Activated naive CD4-positive, alpha-beta T cell treated with anti-CD3 and anti-CD28 coated beads, Interleukin-2, amount 10 ng/mL, durations not matched to agents 7 days and 5 days (primary cell): ENCODE measurements at regions of chr5 and their contacts with region 1.

Region 1: DNA sequence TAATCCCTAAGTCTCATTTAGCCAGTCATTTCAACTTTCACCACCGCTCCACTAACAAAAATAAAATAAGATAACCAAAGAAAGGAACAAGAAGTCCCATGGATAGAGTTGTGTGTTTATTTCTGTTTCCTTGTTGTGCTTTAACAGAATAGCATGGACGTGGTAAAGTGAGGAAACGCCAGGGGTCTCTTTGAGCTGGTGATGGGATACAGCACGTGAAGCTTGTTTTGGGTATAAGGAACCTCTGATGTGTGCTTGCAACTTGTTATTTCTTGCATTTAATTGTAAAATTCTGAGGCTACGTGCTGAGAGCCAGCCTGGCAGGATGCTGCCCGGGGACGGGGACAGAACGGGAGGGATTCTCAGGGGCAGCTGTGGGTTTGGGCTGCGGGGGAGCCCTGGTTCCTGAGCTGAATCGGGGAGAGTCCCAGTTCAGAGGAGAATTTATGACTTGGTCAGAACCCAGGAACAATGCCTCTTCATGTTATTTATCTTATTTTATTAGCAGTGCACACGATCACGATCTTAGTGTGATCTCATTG is 63.4 kb downstream of the ANKRD33B start:
- DNase-seq: no peak
- H3K4me3 Mint-ChIP-seq: peak overlapping the region; percentile 72
- H3K27ac Mint-ChIP-seq: peak overlapping the region; percentile 13
- H3K4me1 Mint-ChIP-seq: peaks cover 25% of the 10 kb centered on the region
- H3K27me3 Mint-ChIP-seq: peaks cover 8% of the 10 kb centered on the region

Region 2: DNA sequence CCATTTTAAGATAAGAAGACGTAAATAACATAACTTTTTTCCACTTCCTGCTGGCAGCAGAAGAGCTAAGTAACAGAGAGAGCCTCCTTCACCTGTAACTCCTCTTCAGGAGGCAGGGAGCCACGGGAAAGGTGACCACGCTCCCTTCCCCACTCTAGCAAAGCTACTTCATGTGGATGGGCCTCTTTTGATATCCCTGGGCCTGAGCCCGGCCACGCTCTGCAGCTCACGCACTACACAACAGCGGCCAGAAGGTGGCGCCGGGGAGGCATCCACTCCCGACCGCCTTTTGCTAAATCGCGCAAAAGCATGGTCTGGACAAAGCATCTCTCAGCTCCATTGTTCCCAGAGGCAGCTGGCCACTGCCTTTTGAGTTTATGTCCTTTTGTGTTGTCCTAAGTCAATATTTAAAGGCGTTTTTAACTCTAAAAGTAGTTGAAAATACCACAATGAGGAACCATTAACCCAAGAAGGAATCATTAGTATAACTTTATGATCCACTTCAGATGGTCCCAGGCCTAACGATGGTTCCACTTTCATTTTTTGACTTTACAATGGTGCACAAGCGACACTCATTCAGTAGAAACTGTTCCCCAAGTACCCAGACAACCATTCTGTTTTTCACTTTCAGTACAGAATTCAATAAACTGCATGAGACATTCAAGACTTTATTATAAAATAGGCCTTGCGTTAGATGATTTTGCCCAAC is 343.1 kb before region 1 on chr5:
- CTCF ChIA-PET with region 1: interaction called, 12 read pairs
- DNase-seq: peak; percentile 81
- H3K4me3 Mint-ChIP-seq: no peak overlapping the region
- H3K27ac Mint-ChIP-seq: no peak overlapping the region
- H3K4me1 Mint-ChIP-seq: peaks cover 14% of the 10 kb centered on the region
- H3K27me3 Mint-ChIP-seq: peaks cover 10% of the 10 kb centered on the region

Region 3: GRCh38 chr5:10445352-10445751 is 181.9 kb before region 1 on chr5:
- CTCF ChIA-PET with region 1: interaction called, 84 read pairs
- DNase-seq: peak; percentile 43
- H3K4me3 Mint-ChIP-seq: peak overlapping the region; percentile 16
- H3K27ac Mint-ChIP-seq: peak overlapping the region; percentile 58
- H3K4me1 Mint-ChIP-seq: peaks cover 63% of the 10 kb centered on the region
- H3K27me3 Mint-ChIP-seq: peaks cover 13% of the 10 kb centered on the region

Region 4: GRCh38 chr5:10452768-10453331 is 174.4 kb before region 1 on chr5:
- CTCF ChIA-PET with region 1: interaction called, 84 read pairs
- DNase-seq: peak; percentile 32
- H3K4me3 Mint-ChIP-seq: no peak overlapping the region
- H3K27ac Mint-ChIP-seq: no peak overlapping the region
- H3K4me1 Mint-ChIP-seq: peaks cover 24% of the 10 kb centered on the region
- H3K27me3 Mint-ChIP-seq: peaks cover 12% of the 10 kb centered on the region

Region 5: DNA sequence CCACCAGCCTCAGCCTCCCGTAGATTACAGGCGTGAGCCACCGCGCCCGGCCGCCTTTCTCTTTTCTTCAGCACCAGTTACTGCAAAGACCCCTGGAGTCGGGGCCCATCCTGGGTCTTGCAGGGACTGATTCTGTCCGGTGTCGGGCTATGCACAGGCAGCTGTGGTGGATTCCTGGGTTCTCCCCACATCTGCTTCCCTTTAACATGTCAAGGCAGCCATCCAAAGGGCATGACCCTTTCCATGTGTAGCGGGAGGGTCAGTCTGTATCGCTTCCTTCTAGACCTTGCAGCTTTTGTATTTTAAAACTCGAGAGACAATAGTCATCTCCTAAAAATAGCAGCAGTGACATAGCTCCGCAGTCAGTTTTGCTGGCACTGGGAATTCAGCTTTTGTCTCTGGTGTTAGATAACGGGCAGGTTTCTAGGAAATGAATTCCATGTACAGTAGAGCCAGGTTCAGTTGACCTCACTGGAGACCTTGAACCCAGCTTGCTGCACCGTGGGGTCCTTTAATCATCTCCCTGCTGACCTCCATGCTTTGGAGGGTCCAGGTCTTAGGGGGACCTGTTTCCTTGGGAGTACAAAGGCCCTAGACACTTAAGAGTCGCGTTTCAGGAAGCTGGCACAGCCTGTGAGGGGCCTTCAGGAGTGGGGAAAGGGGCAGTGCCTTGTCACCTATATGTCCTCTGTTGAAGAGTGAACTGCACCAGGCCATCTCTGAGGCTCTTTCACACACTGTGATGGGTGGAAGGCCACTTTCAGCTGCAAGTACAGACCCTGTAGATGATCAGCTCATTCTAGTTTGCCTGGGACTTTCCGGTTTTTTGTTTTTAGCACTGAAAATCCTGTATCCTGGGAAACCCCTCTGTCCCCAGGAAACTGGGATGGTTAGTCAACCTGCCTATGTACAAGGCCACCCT is 49.6 kb before region 1 on chr5:
- CTCF ChIA-PET with region 1: interaction called, 14 read pairs
- DNase-seq: no peak
- H3K4me3 Mint-ChIP-seq: no peak overlapping the region
- H3K27ac Mint-ChIP-seq: no peak overlapping the region
- H3K4me1 Mint-ChIP-seq: peaks cover 26% of the 10 kb centered on the region
- H3K27me3 Mint-ChIP-seq: peaks cover 6% of the 10 kb centered on the region

Region 6: DNA sequence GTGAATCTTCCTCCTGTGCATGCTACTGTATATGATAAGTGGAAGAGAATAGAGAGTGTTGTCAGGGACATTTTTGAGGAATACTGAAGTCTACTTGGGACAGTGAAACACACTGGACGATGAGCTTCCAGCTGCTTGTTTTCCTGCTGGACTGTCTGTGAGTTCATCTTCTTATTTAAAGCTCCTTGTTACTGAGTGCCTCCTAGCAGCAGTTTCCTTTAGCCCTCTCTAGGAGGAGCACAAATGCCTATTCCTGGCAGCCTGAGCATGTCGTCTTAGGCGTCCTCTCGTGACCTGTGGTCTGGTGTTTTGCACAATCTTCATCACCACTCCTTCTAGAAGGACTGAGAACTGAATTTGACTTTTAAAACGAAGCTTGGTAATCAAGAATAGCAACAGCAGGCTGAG is 19.6 kb before region 1 on chr5:
- CTCF ChIA-PET with region 1: interaction called, 14 read pairs
- DNase-seq: no peak
- H3K4me3 Mint-ChIP-seq: no peak overlapping the region
- H3K27ac Mint-ChIP-seq: no peak overlapping the region
- H3K4me1 Mint-ChIP-seq: peaks cover 16% of the 10 kb centered on the region
- H3K27me3 Mint-ChIP-seq: no peaks in the 10 kb centered on the region

Region 7: GRCh38 chr5:10689391-10690081 is 62.3 kb after region 1 on chr5:
- CTCF ChIA-PET with region 1: interaction called, 24 read pairs
- DNase-seq: peak; percentile 38
- H3K4me3 Mint-ChIP-seq: no peak overlapping the region
- H3K27ac Mint-ChIP-seq: no peak overlapping the region
- H3K4me1 Mint-ChIP-seq: no peaks in the 10 kb centered on the region
- H3K27me3 Mint-ChIP-seq: no peaks in the 10 kb centered on the region